Heart right ventricle (tissue), 16 donors: ENCODE measurements at regions of chr4 and their contacts with region 1.

Region 1: GRCh38 chr4:55008166-55009070 is 117.0 kb downstream of the KDR start:
- DNase-seq: no peak
- ATAC-seq: peak in 3 of 8 donors; percentile 43 to 46 (median 44)
- H3K4me3 ChIP-seq: no peak overlapping the region
- H3K27ac ChIP-seq: peak overlapping the region in 1 of 10 donors; percentile 11
- H3K4me1 ChIP-seq: peaks cover 0 to 26% (median 18%) of the 10 kb centered on the region in 9 donors
- H3K27me3 ChIP-seq: no peaks in the 10 kb centered on the region
- CTCF ChIP-seq: peak in 7 of 9 donors; percentile 17 to 47 (median 32)

Region 2: GRCh38 chr4:55078987-55079386 is 70.6 kb after region 1 on chr4:
- intact Hi-C with region 1: loop called in 3 of 10 experiments (anchors 5 to 10 kb)
- DNase-seq: peak; percentile 62 to 86
- ATAC-seq: peak; percentile 81 to 95 (median 92)
- H3K4me3 ChIP-seq: peak overlapping the region in 2 of 10 donors; percentile 3 to 25
- H3K27ac ChIP-seq: peak overlapping the region; percentile 52 to 85 (median 80)
- H3K4me1 ChIP-seq: peaks cover 0 to 53% (median 21%) of the 10 kb centered on the region in 9 donors
- H3K27me3 ChIP-seq: no peaks in the 10 kb centered on the region
- CTCF ChIP-seq: no peak

Region 3: GRCh38 chr4:55125087-55125721 is 116.8 kb after region 1 on chr4 and contains the start of gene KDR:
- intact Hi-C with region 1: loop called in 3 of 10 experiments (anchors 5 to 10 kb)
- DNase-seq: peak; percentile 69 to 70
- ATAC-seq: peak; percentile 92 to 98 (median 96)
- H3K4me3 ChIP-seq: peak within 1 kb of the TSS; percentile 50 to 88 (median 66)
- H3K27ac ChIP-seq: peak within 1 kb of the TSS; percentile 53 to 91 (median 80)
- H3K4me1 ChIP-seq: peaks cover 0 to 22% (median 7%) of the 10 kb centered on the region in 9 donors
- H3K27me3 ChIP-seq: peaks cover 0 to 37% (median 14%) of the 10 kb centered on the region in 7 donors
- CTCF ChIP-seq: no peak
- total RNA-seq, gene KDR: 12.4 to 45.7 (median 25.3) TPM

Region 4: GRCh38 chr4:55184600-55185523 is 176.4 kb after region 1 on chr4:
- intact Hi-C with region 1: loop called in 3 of 10 experiments (anchors 5 to 10 kb)
- DNase-seq: no peak
- ATAC-seq: peak in 7 of 8 donors; percentile 22 to 65 (median 57)
- H3K4me3 ChIP-seq: no peak overlapping the region
- H3K27ac ChIP-seq: peak overlapping the region in 5 of 10 donors; percentile 3 to 68 (median 15)
- H3K4me1 ChIP-seq: peaks cover 0 to 60% (median 36%) of the 10 kb centered on the region in 9 donors
- H3K27me3 ChIP-seq: no peaks in the 10 kb centered on the region
- CTCF ChIP-seq: peak in 6 of 9 donors; percentile 17 to 47 (median 34)

Region 5: GRCh38 chr4:55378617-55379463 is 370.4 kb after region 1 on chr4:
- intact Hi-C with region 1: no loop called
- DNase-seq: no peak
- ATAC-seq: no peak
- H3K4me3 ChIP-seq: no peak overlapping the region
- H3K27ac ChIP-seq: no peak overlapping the region
- H3K4me1 ChIP-seq: peaks cover 0 to 9% (median 0%) of the 10 kb centered on the region in 9 donors
- H3K27me3 ChIP-seq: no peaks in the 10 kb centered on the region
- CTCF ChIP-seq: no peak

Region 6: GRCh38 chr4:55554453-55555030 is 546.1 kb after region 1 on chr4:
- intact Hi-C with region 1: loop called in 2 of 10 experiments (anchors 10 kb)
- DNase-seq: no peak
- ATAC-seq: peak in 2 of 8 donors; percentile 39 to 48
- H3K4me3 ChIP-seq: no peak overlapping the region
- H3K27ac ChIP-seq: no peak overlapping the region
- H3K4me1 ChIP-seq: peaks cover 0 to 4% (median 0%) of the 10 kb centered on the region in 9 donors
- H3K27me3 ChIP-seq: peaks cover 0 to 3% (median 0%) of the 10 kb centered on the region in 7 donors
- CTCF ChIP-seq: peak; percentile 10 to 66 (median 51)